Activated CD4-positive, alpha-beta memory T cell treated with anti-CD3 and anti-CD28 coated beads for 36 hours (primary cell): ENCODE measurements at regions of chr3 and their contacts with region 1.

Region 1: DNA sequence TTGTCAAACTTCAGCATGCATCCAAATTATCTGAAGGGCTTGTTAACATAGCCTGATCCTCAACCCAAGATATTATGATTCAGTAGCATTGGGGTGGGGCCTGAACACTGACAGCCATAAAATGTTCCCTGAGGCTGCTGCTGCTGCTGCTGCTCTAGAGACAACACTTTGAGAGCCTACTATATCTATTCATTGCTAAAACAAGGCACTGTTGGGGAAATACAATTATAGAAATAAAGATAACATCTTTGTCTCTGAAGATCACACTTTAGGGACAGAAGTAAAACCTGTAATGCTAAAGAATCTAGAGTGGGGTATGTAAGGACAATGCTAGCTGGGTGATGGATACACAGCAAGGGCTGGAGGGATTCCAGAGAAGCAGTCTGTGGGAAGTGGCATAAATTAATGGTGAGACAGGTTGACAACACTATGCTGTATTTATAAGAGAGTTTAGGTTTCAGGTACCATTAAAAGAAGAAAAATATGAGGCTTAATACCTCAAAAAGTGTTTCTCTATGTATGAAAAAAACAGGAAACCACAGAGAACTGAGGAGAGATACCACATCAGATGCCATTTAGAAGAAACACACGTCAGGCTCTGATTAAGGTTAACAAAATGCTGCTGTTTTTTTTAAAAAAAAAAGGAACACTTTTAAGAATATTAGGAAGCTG is 115.9 kb downstream of the CBLB start:
- DNase-seq: peak; percentile 41
- H3K4me3 Mint-ChIP-seq: peak overlapping the region; percentile 21
- H3K27ac Mint-ChIP-seq: peak overlapping the region; percentile 87
- H3K4me1 Mint-ChIP-seq: peaks cover 75% of the 10 kb centered on the region
- H3K27me3 Mint-ChIP-seq: no peaks in the 10 kb centered on the region

Region 2: DNA sequence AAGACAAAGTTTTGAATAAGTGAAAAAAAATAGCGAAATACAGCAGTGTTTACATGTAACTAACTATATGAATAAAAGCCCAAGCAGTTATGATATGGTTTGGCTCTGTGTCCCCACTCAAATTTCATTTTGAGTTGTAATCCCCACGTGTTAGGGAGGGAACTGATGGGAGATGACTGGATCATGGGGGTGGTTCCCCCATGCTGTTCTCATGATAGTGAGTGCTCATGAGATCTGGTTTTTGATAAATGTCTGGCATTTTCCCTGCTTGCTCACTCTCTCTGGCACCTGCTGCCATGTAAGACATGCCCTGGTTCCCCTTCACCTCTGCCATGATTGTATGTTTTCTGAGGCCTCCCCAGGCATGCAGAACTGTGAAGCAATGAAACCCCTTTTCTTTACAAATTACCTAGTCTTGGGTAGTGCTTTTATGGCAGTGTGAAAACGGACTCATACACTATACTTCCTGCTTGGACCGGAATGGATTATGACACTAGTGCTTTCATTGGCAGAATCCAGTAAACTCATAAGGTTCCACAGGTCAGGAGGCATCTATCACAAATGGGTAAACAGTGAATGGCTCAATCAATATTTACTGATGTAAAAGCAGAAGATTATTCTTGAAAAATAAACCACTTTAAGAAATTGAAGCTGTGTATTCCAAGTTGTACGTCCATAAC is 76.1 kb before region 1 on chr3:
- CTCF ChIA-PET with region 1: no interaction called
- POLR2A ChIA-PET with region 1: no interaction called
- intact Hi-C with region 1: loop called (anchors 5 kb)
- DNase-seq: peak; percentile 77
- H3K4me3 Mint-ChIP-seq: no peak overlapping the region
- H3K27ac Mint-ChIP-seq: peak overlapping the region; percentile 86
- H3K4me1 Mint-ChIP-seq: peaks cover 9% of the 10 kb centered on the region
- H3K27me3 Mint-ChIP-seq: no peaks in the 10 kb centered on the region

Region 3: DNA sequence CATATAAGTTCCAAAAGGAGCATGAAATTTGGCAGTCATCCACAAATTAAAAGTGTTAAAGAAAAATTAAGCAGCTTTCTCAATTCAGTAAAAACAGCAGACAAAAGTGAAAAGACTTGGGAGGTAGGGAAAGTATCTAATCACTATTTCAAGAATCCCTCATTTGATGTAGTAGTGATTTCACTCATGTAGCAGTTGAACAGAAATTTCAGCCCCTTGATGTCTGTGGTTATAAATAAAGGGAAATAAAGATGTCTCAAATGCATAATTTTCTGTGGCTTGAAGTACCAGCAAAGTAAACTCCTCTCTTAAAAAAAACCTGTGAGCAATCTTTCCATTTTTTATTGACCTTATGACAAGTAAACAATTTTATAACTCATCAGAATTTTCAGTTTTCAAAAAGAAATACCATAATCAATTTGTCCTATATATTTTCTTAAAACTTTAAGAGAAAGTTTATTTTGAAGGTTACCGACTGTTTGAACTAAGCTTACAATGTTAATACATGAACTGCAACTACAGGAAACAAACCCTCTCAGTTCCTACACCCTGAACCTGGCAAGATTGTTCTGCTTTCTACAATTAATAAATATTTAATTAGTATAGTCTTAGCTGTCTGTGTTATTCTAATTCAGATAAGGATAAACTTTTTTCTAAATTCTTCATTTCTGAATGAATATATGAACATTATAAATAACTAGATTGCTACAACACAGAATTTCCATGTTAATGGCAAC is 21.7 kb after region 1 on chr3:
- CTCF ChIA-PET with region 1: no interaction called
- POLR2A ChIA-PET with region 1: interaction called, 3 read pairs
- intact Hi-C with region 1: loop called (anchors 1 kb)
- DNase-seq: no peak
- H3K4me3 Mint-ChIP-seq: no peak overlapping the region
- H3K27ac Mint-ChIP-seq: peak overlapping the region; percentile 49
- H3K4me1 Mint-ChIP-seq: peaks cover 71% of the 10 kb centered on the region
- H3K27me3 Mint-ChIP-seq: no peaks in the 10 kb centered on the region

Region 4: GRCh38 chr3:105806361-105806760 is 53.5 kb after region 1 on chr3:
- CTCF ChIA-PET with region 1: no interaction called
- POLR2A ChIA-PET with region 1: interaction called, 4 read pairs
- intact Hi-C with region 1: loop called (anchors 1 kb)
- DNase-seq: no peak
- H3K4me3 Mint-ChIP-seq: no peak overlapping the region
- H3K27ac Mint-ChIP-seq: peak overlapping the region; percentile 45
- H3K4me1 Mint-ChIP-seq: peaks cover 61% of the 10 kb centered on the region
- H3K27me3 Mint-ChIP-seq: no peaks in the 10 kb centered on the region